Activated CD4-positive, alpha-beta memory T cell treated with anti-CD3 and anti-CD28 coated beads for 36 hours (primary cell): ENCODE measurements at regions of chr16 and their contacts with region 1.

Region 1: GRCh38 chr16:15434425-15435215 is at the start of gene BMERB1:
- DNase-seq: peak; percentile 78
- H3K4me3 Mint-ChIP-seq: peak within 1 kb of the TSS; percentile 87
- H3K27ac Mint-ChIP-seq: no peak within 1 kb of the TSS
- H3K4me1 Mint-ChIP-seq: peaks cover 16% of the 10 kb centered on the region
- H3K27me3 Mint-ChIP-seq: peaks cover 18% of the 10 kb centered on the region
- total RNA-seq, gene BMERB1: 7.1 to 7.7 TPM

Region 2: DNA sequence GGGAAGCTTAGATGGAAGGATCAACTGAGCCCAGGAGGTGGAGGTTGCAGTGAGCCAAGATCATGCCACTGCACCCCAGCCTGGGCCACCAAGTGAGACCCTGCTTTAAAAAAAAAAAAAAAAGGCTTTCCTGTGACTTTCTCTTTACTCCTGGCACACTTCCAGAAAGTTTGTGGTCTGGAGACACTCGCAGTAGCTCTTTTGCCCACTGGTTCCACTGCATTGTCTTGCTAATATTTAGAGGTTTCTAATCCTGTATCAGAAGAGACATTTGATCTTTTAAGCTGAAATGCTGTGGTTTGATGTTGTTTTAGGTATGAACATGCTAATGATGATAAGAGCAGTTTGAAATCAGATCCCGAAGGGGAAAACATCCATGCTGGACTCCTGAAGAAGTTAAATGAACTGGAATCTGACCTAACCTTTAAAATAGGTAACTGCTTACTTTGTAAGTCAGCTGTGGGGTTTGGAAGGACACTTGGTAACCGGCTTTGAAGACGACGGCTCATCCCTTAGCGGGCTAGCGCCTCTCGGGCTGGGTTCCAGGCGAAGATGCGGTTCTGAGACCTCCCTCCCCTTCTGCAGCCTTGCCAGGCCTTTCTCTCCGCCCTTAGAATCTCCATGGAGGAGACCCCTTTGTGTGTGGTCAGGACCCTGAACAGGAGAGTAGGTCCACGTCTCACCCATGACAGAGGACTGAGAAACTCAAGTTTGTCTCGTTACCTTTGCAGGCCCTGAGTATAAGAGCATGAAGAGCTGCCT is 401.9 kb before region 1 on chr16:
- CTCF ChIA-PET with region 1: no interaction called
- POLR2A ChIA-PET with region 1: no interaction called
- intact Hi-C with region 1: no loop called
- DNase-seq: no peak
- H3K4me3 Mint-ChIP-seq: no peak overlapping the region
- H3K27ac Mint-ChIP-seq: no peak overlapping the region
- H3K4me1 Mint-ChIP-seq: peaks cover 9% of the 10 kb centered on the region
- H3K27me3 Mint-ChIP-seq: no peaks in the 10 kb centered on the region

Region 3: GRCh38 chr16:15509593-15510535 is 75.2 kb after region 1 on chr16:
- CTCF ChIA-PET with region 1: no interaction called
- POLR2A ChIA-PET with region 1: no interaction called
- intact Hi-C with region 1: loop called (anchors 5 kb)
- DNase-seq: peak; percentile 23
- H3K4me3 Mint-ChIP-seq: no peak overlapping the region
- H3K27ac Mint-ChIP-seq: peak overlapping the region; percentile 18
- H3K4me1 Mint-ChIP-seq: peaks cover 8% of the 10 kb centered on the region
- H3K27me3 Mint-ChIP-seq: peaks cover 8% of the 10 kb centered on the region

Region 4: DNA sequence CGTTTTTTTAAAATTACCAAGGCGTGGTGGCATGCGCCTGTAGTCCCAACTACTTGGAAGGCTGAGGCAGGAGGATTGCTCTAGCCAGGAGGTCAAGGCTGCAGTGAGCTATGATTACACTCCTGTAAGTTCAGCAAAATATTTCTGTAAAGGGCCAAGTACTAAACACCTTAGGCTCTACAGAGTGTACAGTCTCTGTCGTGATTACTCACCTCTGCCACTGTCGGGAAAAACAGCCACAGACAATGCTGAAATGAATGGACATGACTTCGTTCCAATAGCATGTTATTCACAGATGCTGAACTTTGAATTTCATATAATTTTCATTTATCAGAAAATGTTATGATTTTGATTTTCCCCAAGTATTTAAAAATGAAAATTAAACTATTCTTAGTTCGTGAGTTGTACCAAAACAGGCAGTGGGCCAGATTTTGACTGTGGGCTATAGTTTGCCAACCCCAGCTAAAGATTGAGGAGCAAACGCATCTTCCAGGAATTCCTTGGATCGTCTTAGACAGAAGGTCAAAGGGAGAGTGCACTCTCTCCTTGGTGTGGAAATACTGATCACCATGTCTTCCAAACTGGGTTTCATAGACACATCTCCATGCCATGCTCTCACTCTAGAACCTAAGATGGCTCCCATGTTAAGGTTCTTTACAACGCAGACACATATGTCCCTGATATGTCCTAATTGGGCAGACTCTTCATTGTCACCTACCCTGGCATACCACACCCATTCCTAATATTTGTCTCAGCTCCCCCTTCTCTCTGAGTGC is 118.9 kb after region 1 on chr16:
- CTCF ChIA-PET with region 1: no interaction called
- POLR2A ChIA-PET with region 1: no interaction called
- intact Hi-C with region 1: loop called (anchors 5 kb)
- DNase-seq: peak; percentile 77
- H3K4me3 Mint-ChIP-seq: no peak overlapping the region
- H3K27ac Mint-ChIP-seq: no peak overlapping the region
- H3K4me1 Mint-ChIP-seq: peaks cover 21% of the 10 kb centered on the region
- H3K27me3 Mint-ChIP-seq: no peaks in the 10 kb centered on the region

Region 5: GRCh38 chr16:15704545-15704987 is 269.9 kb after region 1 on chr16:
- CTCF ChIA-PET with region 1: no interaction called
- POLR2A ChIA-PET with region 1: no interaction called
- intact Hi-C with region 1: loop called (anchors 10 kb)
- DNase-seq: peak; percentile 83
- H3K4me3 Mint-ChIP-seq: no peak overlapping the region
- H3K27ac Mint-ChIP-seq: peak overlapping the region; percentile 50
- H3K4me1 Mint-ChIP-seq: peaks cover 12% of the 10 kb centered on the region
- H3K27me3 Mint-ChIP-seq: no peaks in the 10 kb centered on the region